Breast epithelium (tissue), 4 donors: ENCODE measurements at regions of chr6 and their contacts with region 1.

Region 1: DNA sequence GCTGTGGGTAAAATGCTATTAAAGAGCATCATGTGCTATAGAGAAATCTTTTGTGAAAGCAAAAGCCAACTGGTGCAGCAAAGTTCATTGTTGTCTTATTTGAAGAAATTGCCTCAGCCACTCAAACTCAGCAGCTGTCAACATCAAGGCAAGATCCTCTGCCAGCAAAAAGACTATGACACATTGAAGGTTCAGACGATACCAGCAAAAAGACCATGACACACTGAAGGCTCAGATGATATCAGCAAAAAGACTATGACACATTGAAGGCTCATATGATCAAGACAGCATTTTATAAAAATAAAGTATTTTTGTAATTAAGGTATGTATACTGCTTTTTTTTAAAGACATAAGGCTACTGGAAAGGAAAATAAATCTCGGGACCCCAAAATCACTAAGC is 118.4 kb upstream of the RUNX2 start:
- DNase-seq: no peak
- H3K4me3 ChIP-seq: no peak overlapping the region
- H3K27ac ChIP-seq: no peak overlapping the region
- H3K4me1 ChIP-seq: no peaks in the 10 kb centered on the region
- H3K27me3 ChIP-seq: no peaks in the 10 kb centered on the region
- CTCF ChIP-seq: no peak
- POLR2A ChIP-seq: no peak

Region 2: GRCh38 chr6:44800171-44800783 is 409.5 kb before region 1 on chr6:
- intact Hi-C with region 1: no loop called
- DNase-seq: peak in 1 of 2 donors; percentile 43
- H3K4me3 ChIP-seq: no peak overlapping the region
- H3K27ac ChIP-seq: peak overlapping the region in 1 of 2 donors; percentile 13
- H3K4me1 ChIP-seq: peaks cover 0 to 7% of the 10 kb centered on the region in 2 donors
- H3K27me3 ChIP-seq: no peaks in the 10 kb centered on the region
- CTCF ChIP-seq: no peak
- POLR2A ChIP-seq: no peak

Region 3: GRCh38 chr6:45156075-45156474 is 53.7 kb before region 1 on chr6:
- intact Hi-C with region 1: loop called (anchors 2 kb)
- DNase-seq: no peak
- H3K4me3 ChIP-seq: no peak overlapping the region
- H3K27ac ChIP-seq: no peak overlapping the region
- H3K4me1 ChIP-seq: no peaks in the 10 kb centered on the region
- H3K27me3 ChIP-seq: no peaks in the 10 kb centered on the region
- CTCF ChIP-seq: no peak
- POLR2A ChIP-seq: no peak